Activated CD4-positive, alpha-beta T cell treated with anti-CD3 and anti-CD28 coated beads, Interleukin-2, amount 10 ng/mL, durations not matched to agents 24 days and 14 days (primary cell): ENCODE measurements at regions of chr7 and their contacts with region 1.

Region 1: DNA sequence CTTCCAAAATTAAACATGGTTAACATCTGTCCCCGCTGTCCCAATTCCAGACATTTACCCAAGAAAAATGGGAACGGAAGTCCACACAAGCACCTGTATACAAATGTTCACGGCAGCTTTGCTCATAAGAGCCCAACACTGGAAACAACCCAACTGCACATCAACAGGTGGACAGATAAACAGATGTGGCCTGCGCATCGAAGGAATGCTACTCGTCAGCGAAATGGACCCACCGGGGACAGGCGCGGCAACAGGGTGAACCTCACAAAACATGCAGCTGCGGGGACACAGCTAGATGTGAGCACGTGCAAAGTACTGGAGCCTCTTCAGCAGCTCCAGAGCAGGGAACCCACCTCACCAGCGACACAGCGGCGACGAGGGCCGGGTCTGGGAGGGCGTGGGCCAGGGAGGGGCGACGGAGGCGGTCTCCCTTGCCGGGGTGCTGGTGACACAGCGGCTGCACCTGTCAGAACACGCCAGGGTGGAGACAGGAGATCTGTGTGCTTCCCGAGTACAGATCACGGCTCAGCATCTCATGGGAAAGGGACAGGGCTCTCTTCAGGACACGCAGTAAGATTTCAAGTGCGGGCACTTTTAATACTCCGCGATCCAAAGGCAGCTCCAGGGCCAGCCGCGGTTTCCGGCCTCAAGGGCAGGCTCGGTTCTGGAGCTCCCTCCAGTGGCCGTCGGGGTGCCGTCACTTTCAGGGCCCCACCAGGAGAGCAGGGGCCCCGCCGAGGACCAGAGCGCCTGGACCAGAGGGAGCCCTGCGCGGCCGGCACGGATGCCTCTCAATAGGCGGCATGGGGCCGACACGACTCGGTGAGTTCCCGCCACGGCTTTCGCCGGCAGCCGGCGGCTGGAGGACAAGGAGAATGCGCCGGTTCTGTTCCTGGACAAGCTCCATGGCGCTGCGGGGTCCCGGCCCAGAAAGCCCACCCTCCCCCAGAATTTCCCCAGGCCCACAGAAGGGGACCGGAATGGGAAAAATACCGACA is 21.2 kb downstream of the GPR146 start:
- DNase-seq: peak; percentile 96
- H3K4me3 Mint-ChIP-seq: peak overlapping the region; percentile 60
- H3K27ac Mint-ChIP-seq: no peak overlapping the region
- H3K4me1 Mint-ChIP-seq: no peaks in the 10 kb centered on the region
- H3K27me3 Mint-ChIP-seq: peaks cover 4% of the 10 kb centered on the region

Region 2: GRCh38 chr7:909358-910329 is 155.9 kb before region 1 on chr7:
- intact Hi-C with region 1: loop called (anchors 5 kb)
- DNase-seq: no peak
- H3K4me3 Mint-ChIP-seq: no peak overlapping the region
- H3K27ac Mint-ChIP-seq: no peak overlapping the region
- H3K4me1 Mint-ChIP-seq: peaks cover 7% of the 10 kb centered on the region
- H3K27me3 Mint-ChIP-seq: peaks cover 2% of the 10 kb centered on the region

Region 3: GRCh38 chr7:992709-993607 is 72.6 kb before region 1 on chr7:
- intact Hi-C with region 1: loop called (anchors 1 kb)
- DNase-seq: peak; percentile 97
- H3K4me3 Mint-ChIP-seq: no peak overlapping the region
- H3K27ac Mint-ChIP-seq: peak overlapping the region; percentile 15
- H3K4me1 Mint-ChIP-seq: peaks cover 4% of the 10 kb centered on the region
- H3K27me3 Mint-ChIP-seq: no peaks in the 10 kb centered on the region

Region 4: DNA sequence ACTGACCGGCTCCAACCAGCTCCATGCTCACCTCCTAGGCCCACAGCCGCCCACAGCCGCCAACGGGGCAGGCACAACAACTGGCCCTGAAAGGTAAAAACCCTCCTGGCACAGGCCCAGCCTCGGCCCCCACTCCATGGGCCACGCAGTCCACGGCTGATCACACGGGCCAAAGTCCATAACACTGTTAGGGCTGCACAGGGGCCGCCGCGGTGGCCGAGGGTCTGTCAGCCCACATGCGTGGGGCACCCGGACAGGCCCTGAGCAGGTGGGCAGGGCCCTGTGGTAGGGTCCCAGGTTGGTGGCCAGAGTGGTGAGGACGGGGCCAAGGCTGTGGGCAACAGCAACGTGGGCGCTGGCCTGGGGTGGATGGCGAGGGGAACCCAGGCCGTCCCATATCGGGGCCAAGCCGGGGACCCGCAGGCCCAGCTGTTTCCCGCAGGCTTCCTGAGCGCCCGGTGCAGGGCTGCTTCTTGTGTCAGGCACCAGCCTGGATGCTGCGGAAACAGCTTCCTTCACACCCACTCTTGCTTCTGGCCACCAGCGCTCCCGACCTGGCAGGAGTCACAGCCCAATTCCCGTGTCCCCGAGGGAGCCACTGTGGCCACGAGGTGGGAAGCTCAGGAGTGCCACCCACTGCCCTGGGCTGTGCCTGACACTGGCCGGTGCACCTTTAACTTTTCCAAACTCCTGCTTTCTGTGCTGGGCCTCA is 53.4 kb before region 1 on chr7:
- intact Hi-C with region 1: loop called (anchors 5 kb)
- DNase-seq: no peak
- H3K4me3 Mint-ChIP-seq: no peak overlapping the region
- H3K27ac Mint-ChIP-seq: no peak overlapping the region
- H3K4me1 Mint-ChIP-seq: peaks cover 6% of the 10 kb centered on the region
- H3K27me3 Mint-ChIP-seq: no peaks in the 10 kb centered on the region

Region 5: GRCh38 chr7:1028031-1028770 is 37.4 kb before region 1 on chr7:
- intact Hi-C with region 1: loop called (anchors 2 kb)
- DNase-seq: peak; percentile 96
- H3K4me3 Mint-ChIP-seq: peak overlapping the region; percentile 77
- H3K27ac Mint-ChIP-seq: peak overlapping the region; percentile 88
- H3K4me1 Mint-ChIP-seq: peaks cover 17% of the 10 kb centered on the region
- H3K27me3 Mint-ChIP-seq: no peaks in the 10 kb centered on the region

Region 6: GRCh38 chr7:1255131-1256032 is 189.8 kb after region 1 on chr7:
- intact Hi-C with region 1: no loop called
- DNase-seq: no peak
- H3K4me3 Mint-ChIP-seq: no peak overlapping the region
- H3K27ac Mint-ChIP-seq: no peak overlapping the region
- H3K4me1 Mint-ChIP-seq: no peaks in the 10 kb centered on the region
- H3K27me3 Mint-ChIP-seq: peaks cover 18% of the 10 kb centered on the region